H1 (cell line): ENCODE measurements at regions of chr1 and their contacts with region 1.

Region 1: GRCh38 chr1:153633716-153634665 is at the start of gene CHTOP:
- DNase-seq: peak; percentile 98 to 100
- H3K4me3 ChIP-seq: peak within 1 kb of the TSS; percentile 73 to 100 (median 97)
- H3K27ac ChIP-seq: peak within 1 kb of the TSS; percentile 100
- H3K4me1 ChIP-seq: peaks cover 0 to 5% (median 5%) of the 10 kb centered on the region in 4 experiments; a peak in 5 of 7 replicates
- H3K27me3 ChIP-seq: no peaks in the 10 kb centered on the region
- CTCF ChIP-seq: peak in 1 of 3 experiments; percentile 10; a peak in 1 of 4 replicates
- EP300 ChIP-seq: no peak
- POLR2A ChIP-seq: peak; percentile 82 to 97
- RAD21 ChIP-seq: no peak
- total RNA-seq, gene CHTOP: 103 and 104 TPM in 2 replicates

Region 2: GRCh38 chr1:153478692-153479618 is 155.0 kb before region 1 on chr1:
- CTCF ChIA-PET with region 1: no interaction called
- POLR2A ChIA-PET with region 1: no interaction called
- DNase-seq: no peak
- H3K4me3 ChIP-seq: no peak overlapping the region
- H3K27ac ChIP-seq: no peak overlapping the region
- H3K4me1 ChIP-seq: peaks cover 0 to 11% (median 0%) of the 10 kb centered on the region in 4 experiments; a peak in 2 of 7 replicates
- H3K27me3 ChIP-seq: no peaks in the 10 kb centered on the region
- CTCF ChIP-seq: no peak
- EP300 ChIP-seq: no peak
- POLR2A ChIP-seq: no peak
- RAD21 ChIP-seq: no peak

Region 3: GRCh38 chr1:153520230-153520629 is 113.8 kb before region 1 on chr1:
- CTCF ChIA-PET with region 1: interaction called, 13 read pairs
- POLR2A ChIA-PET with region 1: interaction called, 13 read pairs
- DNase-seq: no peak
- H3K4me3 ChIP-seq: no peak overlapping the region
- H3K27ac ChIP-seq: no peak overlapping the region
- H3K4me1 ChIP-seq: peaks cover 3 to 11% (median 5%) of the 10 kb centered on the region in 4 experiments; a peak in 6 of 7 replicates
- H3K27me3 ChIP-seq: peaks cover 0 to 14% (median 8%) of the 10 kb centered on the region in 4 experiments; a peak in 4 of 7 replicates
- CTCF ChIP-seq: no peak
- EP300 ChIP-seq: no peak
- POLR2A ChIP-seq: no peak
- RAD21 ChIP-seq: no peak

Region 4: DNA sequence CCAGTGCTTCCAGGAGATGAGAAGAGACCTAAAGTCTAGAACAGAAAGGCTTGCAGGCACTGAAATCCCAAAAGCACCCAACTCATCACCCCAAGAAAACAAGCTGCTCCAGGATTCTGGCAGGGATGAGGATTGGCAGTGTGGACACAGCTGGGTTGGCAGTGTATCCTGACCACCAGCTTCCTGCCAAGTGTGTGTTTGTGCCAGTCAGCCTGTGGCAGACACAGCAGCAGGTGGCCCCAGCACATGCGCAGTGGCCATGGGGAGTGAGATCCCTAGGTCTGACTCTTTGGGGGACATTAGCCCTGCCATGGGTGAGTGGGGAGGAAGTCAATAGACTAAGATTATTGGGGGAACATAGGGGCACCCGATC is 15.9 kb after region 1 on chr1:
- CTCF ChIA-PET with region 1: interaction called, 13 read pairs
- POLR2A ChIA-PET with region 1: interaction called, 343 read pairs
- DNase-seq: no peak
- H3K4me3 ChIP-seq: no peak overlapping the region
- H3K27ac ChIP-seq: no peak overlapping the region
- H3K4me1 ChIP-seq: peaks cover 0 to 3% (median 0%) of the 10 kb centered on the region in 4 experiments; a peak in 1 of 7 replicates
- H3K27me3 ChIP-seq: no peaks in the 10 kb centered on the region
- CTCF ChIP-seq: no peak
- EP300 ChIP-seq: no peak
- POLR2A ChIP-seq: no peak
- RAD21 ChIP-seq: no peak

Region 5: GRCh38 chr1:153658400-153659174 is 24.6 kb after region 1 on chr1 and contains the start of gene SNAPIN:
- CTCF ChIA-PET with region 1: interaction called, 9 read pairs
- POLR2A ChIA-PET with region 1: interaction called, 343 read pairs
- DNase-seq: peak; percentile 64 to 96
- H3K4me3 ChIP-seq: peak within 1 kb of the TSS; percentile 71 to 98 (median 90)
- H3K27ac ChIP-seq: peak within 1 kb of the TSS; percentile 85; the same call in 1 of the 2 replicates
- H3K4me1 ChIP-seq: peaks cover 0 to 4% (median 2%) of the 10 kb centered on the region in 4 experiments; a peak in 2 of 7 replicates
- H3K27me3 ChIP-seq: no peaks in the 10 kb centered on the region
- CTCF ChIP-seq: peak in 2 of 3 experiments; percentile 4 to 6; a peak in 2 of 4 replicates
- EP300 ChIP-seq: no peak
- POLR2A ChIP-seq: peak in 1 of 2 experiments; percentile 83; a peak in 2 of 3 replicates
- RAD21 ChIP-seq: peak in 1 of 2 experiments; percentile 6; a peak in 1 of 4 replicates
- total RNA-seq, gene SNAPIN: 22.3 and 25.7 TPM in 2 replicates